ENCODE measurements at regions of chr17 and their contacts with region 1.

Region 1: GRCh38 chr17:71764505-71764904 is 356.3 kb upstream of the SOX9 start:
- DNase-seq: peak; percentile 62
- ATAC-seq: peak; percentile 100
- H3K4me3 ChIP-seq: no peak overlapping the region
- H3K27ac ChIP-seq: no peak overlapping the region
- H3K4me1 ChIP-seq: peaks cover 0 to 9% of the 10 kb centered on the region in 2 experiments; a peak in 2 of 4 replicates
- H3K27me3 ChIP-seq: no peaks in the 10 kb centered on the region
- CTCF ChIP-seq: peak; percentile 56 to 96 (median 92); a peak in 5 of 6 replicates
- POLR2A ChIP-seq: no peak
- RAD21 ChIP-seq: peak; percentile 81

Region 2: DNA sequence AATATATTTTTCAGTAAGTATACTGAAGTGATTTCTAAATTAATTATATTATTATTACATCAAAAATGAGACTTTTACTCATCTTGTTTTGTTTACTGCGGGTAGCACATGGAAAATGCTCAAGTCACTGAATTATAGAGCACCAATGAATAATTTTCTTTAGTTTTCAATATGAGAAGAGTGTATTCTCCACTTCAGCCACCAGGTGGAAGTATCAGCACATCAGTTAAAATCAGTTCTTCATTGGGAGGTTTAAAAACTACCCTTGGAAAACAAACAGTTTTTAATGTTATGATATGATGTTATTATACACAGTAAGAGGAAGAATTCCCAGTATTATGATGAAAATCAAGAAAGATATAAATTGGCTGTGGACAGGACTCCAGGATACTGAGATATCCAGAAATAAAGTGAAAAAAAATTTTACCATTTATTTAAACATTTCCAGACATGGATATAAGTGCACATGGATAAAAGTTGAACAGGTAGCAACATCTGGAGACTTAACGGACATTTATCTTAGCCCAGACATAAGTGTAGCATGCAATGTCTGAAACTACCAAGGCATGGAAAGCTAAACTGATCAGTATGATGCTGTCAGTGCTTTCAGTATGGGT is 1127.9 kb before region 1 on chr17:
- CTCF ChIA-PET with region 1: no interaction called
- POLR2A ChIA-PET with region 1: no interaction called
- RAD21 ChIA-PET with region 1: no interaction called
- intact Hi-C with region 1: loop called (anchors 10 kb)
- DNase-seq: peak; percentile 54
- ATAC-seq: peak; percentile 63
- H3K4me3 ChIP-seq: no peak overlapping the region
- H3K27ac ChIP-seq: no peak overlapping the region
- H3K4me1 ChIP-seq: no peaks in the 10 kb centered on the region
- H3K27me3 ChIP-seq: no peaks in the 10 kb centered on the region
- CTCF ChIP-seq: peak; percentile 61 to 86 (median 70); a peak in 5 of 6 replicates
- POLR2A ChIP-seq: no peak
- RAD21 ChIP-seq: peak; percentile 91

Region 3: GRCh38 chr17:71118039-71118438 is 646.5 kb before region 1 on chr17:
- CTCF ChIA-PET with region 1: no interaction called
- POLR2A ChIA-PET with region 1: no interaction called
- RAD21 ChIA-PET with region 1: no interaction called
- intact Hi-C with region 1: loop called (anchors 5 kb)
- DNase-seq: peak; percentile 29
- ATAC-seq: peak; percentile 46; the same call in 1 of the 2 replicates
- H3K4me3 ChIP-seq: no peak overlapping the region
- H3K27ac ChIP-seq: no peak overlapping the region
- H3K4me1 ChIP-seq: no peaks in the 10 kb centered on the region
- H3K27me3 ChIP-seq: no peaks in the 10 kb centered on the region
- CTCF ChIP-seq: peak; percentile 55 to 77 (median 66); a peak in 5 of 6 replicates
- POLR2A ChIP-seq: no peak
- RAD21 ChIP-seq: peak; percentile 86

Region 4: GRCh38 chr17:71237903-71238538 is 526.5 kb before region 1 on chr17:
- CTCF ChIA-PET with region 1: no interaction called
- POLR2A ChIA-PET with region 1: no interaction called
- RAD21 ChIA-PET with region 1: no interaction called
- intact Hi-C with region 1: loop called (anchors 5 kb)
- DNase-seq: peak; percentile 57
- ATAC-seq: peak; percentile 96
- H3K4me3 ChIP-seq: no peak overlapping the region
- H3K27ac ChIP-seq: no peak overlapping the region
- H3K4me1 ChIP-seq: no peaks in the 10 kb centered on the region
- H3K27me3 ChIP-seq: no peaks in the 10 kb centered on the region
- CTCF ChIP-seq: peak; percentile 38 to 66 (median 64)
- POLR2A ChIP-seq: no peak
- RAD21 ChIP-seq: peak; percentile 89

Region 5: GRCh38 chr17:71472809-71473789 is 291.4 kb before region 1 on chr17:
- CTCF ChIA-PET with region 1: interaction called, 8 read pairs
- POLR2A ChIA-PET with region 1: no interaction called
- RAD21 ChIA-PET with region 1: no interaction called
- intact Hi-C with region 1: loop called (anchors 2 kb)
- DNase-seq: peak; percentile 86
- ATAC-seq: peak; percentile 99
- H3K4me3 ChIP-seq: no peak overlapping the region
- H3K27ac ChIP-seq: no peak overlapping the region
- H3K4me1 ChIP-seq: peaks cover 0 to 11% of the 10 kb centered on the region in 2 experiments; a peak in 2 of 4 replicates
- H3K27me3 ChIP-seq: no peaks in the 10 kb centered on the region
- CTCF ChIP-seq: peak; percentile 79 to 93 (median 88)
- POLR2A ChIP-seq: no peak
- RAD21 ChIP-seq: peak; percentile 89

Region 6: DNA sequence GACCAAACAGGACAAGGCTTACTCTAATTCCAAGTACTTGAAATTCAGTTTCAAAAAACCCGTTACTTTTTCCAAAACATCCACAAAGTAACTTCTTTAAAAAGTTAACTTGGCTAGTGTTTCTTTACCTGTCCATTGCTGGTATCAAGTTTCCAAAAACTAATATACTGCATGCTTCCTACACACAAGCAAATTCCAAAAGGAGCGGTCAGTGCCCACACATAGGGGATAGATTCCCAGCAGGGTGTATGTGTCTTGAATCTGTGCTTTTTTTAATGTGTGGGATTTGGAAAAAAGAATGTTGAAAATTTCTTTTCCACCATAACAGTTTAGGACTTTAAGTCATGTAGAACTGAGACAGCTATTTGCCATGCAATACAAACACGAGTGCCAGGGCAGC is 11.4 kb before region 1 on chr17:
- CTCF ChIA-PET with region 1: no interaction called
- POLR2A ChIA-PET with region 1: no interaction called
- RAD21 ChIA-PET with region 1: no interaction called
- intact Hi-C with region 1: no loop called
- DNase-seq: no peak
- ATAC-seq: no peak
- H3K4me3 ChIP-seq: no peak overlapping the region
- H3K27ac ChIP-seq: no peak overlapping the region
- H3K4me1 ChIP-seq: no peaks in the 10 kb centered on the region
- H3K27me3 ChIP-seq: no peaks in the 10 kb centered on the region
- CTCF ChIP-seq: no peak
- POLR2A ChIP-seq: no peak
- RAD21 ChIP-seq: no peak